Endothelial cell of umbilical vein (primary cell): ENCODE measurements at regions of chr4 and their contacts with region 1.

Region 1: GRCh38 chr4:151117371-151117962 is 18.0 kb downstream of the RPS3A start:
- DNase-seq: peak; percentile 86
- H3K4me3 ChIP-seq: no peak overlapping the region
- H3K27ac ChIP-seq: no peak overlapping the region
- H3K4me1 ChIP-seq: no peaks in the 10 kb centered on the region
- H3K27me3 ChIP-seq: no peaks in the 10 kb centered on the region
- CTCF ChIP-seq: peak; percentile 53 to 61
- POLR2A ChIP-seq: no peak

Region 2: DNA sequence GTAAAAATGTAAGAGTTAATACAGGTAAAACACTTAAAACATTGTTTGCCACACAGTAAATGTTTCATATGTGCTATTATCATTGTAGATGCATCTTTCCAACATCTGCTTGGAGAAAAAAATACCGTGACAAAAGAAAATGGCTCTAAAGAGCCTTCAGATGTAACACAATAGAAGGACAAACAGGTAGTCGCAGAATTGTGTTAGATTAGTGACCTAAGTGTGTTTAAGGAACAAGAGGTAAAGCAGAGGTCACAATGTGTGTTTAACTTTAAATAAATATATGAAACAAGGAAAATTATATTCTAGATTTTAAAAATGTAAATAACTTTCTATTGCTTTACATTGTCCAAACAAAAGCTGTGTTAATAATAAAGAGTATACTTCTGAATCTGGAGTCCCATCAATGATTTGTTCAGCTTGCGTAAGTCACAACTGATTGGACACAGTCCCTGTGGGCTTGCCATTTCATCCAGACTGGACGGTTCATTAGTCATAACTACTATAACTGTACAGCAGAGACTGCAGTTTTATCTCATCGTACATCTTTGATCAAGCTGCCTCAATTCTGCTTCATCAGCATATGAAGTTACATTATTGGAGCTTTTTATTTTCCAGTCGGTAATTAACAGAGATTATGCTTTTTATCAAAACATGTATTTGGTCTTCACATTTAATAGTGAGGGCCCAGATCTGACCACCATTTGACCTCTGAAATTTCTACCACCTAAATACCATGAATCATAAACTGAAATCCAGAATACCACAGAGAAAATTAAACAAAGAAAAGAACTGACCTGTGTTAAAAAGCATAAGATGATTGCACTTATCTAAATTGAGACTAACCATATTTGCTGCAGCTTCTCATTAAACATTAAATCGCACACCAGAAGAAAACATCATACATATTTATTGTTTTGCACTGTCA is 548.1 kb before region 1 on chr4:
- CTCF ChIA-PET with region 1: no interaction called
- POLR2A ChIA-PET with region 1: no interaction called
- dilution Hi-C with region 1: no loop called
- intact Hi-C with region 1: no loop called
- DNase-seq: no peak
- H3K4me3 ChIP-seq: no peak overlapping the region
- H3K27ac ChIP-seq: no peak overlapping the region
- H3K4me1 ChIP-seq: no peaks in the 10 kb centered on the region
- H3K27me3 ChIP-seq: no peaks in the 10 kb centered on the region
- CTCF ChIP-seq: no peak
- POLR2A ChIP-seq: no peak

Region 3: DNA sequence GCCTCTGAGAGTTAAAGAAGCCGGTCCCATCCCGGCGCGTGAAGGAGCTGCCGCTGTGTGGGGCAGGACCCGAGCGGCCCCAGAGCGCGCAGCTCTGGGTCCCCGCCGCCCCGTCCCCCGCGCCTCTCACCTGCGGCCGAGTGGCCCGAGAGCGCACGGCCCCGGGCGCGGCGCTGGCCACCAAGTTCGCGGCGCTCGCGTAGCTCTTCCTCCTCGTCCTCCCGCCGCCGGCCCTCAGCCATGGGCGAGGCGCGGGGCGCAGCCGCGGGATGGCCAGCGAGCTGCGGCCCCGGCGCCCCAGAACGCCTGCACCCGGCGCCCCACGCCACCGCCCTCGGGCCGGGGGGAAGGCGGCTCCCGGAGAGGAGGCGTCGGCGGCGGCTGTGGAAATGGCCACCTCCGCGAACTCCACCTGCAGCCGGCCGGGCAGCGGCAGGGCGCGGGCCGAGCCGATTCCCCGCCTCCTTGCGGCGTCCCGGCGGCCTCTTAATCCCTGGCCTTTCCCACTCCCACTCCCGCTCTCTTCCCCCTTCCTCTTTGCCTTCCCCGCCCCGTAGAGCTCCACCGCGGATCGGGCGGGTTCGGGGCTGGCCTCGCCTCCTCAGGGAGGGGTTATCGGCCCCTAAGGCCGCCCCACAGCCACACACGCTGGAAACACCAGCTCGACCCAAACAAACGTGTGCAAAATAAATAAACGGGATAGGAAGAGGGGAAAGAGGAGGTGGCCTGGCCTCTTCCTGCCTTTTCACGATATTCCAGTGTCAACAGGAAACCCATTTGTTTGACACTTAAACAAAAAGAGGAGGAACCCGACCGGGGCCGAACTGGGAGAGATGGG is 207.9 kb after region 1 on chr4 and contains the start of gene SH3D19:
- CTCF ChIA-PET with region 1: interaction called, 10 read pairs
- POLR2A ChIA-PET with region 1: no interaction called
- dilution Hi-C with region 1: no loop called
- intact Hi-C with region 1: no loop called
- DNase-seq: peak; percentile 91
- H3K4me3 ChIP-seq: peak within 1 kb of the TSS; percentile 55 to 86 (median 74)
- H3K27ac ChIP-seq: peak within 1 kb of the TSS; percentile 69
- H3K4me1 ChIP-seq: peaks cover 24% of the 10 kb centered on the region
- H3K27me3 ChIP-seq: no peaks in the 10 kb centered on the region
- CTCF ChIP-seq: no peak
- POLR2A ChIP-seq: peak; percentile 30
- total RNA-seq, gene SH3D19: 86.3 and 92.8 TPM in 2 replicates

Region 4: GRCh38 chr4:151418385-151418784 is 300.9 kb after region 1 on chr4:
- CTCF ChIA-PET with region 1: interaction called, 10 read pairs
- POLR2A ChIA-PET with region 1: no interaction called
- dilution Hi-C with region 1: no loop called
- intact Hi-C with region 1: loop called (anchors 1 kb)
- DNase-seq: peak; percentile 91
- H3K4me3 ChIP-seq: no peak overlapping the region
- H3K27ac ChIP-seq: peak overlapping the region; percentile 89
- H3K4me1 ChIP-seq: peaks cover 43% of the 10 kb centered on the region
- H3K27me3 ChIP-seq: no peaks in the 10 kb centered on the region
- CTCF ChIP-seq: no peak
- POLR2A ChIP-seq: peak; percentile 35

Region 5: DNA sequence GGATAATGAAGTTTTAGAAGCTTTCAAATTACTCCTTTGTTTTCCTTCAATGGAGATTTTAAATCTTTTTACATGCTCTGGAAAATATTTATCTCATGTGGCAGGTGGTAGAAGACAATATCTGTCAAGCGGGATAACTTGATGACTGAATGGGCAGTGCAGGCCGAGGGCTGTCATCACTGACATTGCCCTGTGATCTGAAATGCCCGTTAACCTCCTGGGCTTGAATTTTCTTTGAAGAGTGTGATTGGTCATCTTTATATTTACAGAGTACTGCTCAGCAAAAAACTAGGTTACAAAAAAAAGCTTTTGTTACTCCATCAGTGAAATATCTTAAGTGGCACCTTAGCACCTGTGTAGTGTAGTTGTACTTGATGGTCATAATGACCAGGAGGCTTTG is 495.8 kb after region 1 on chr4:
- CTCF ChIA-PET with region 1: interaction called, 9 read pairs
- POLR2A ChIA-PET with region 1: no interaction called
- dilution Hi-C with region 1: no loop called
- intact Hi-C with region 1: loop called (anchors 1 kb)
- DNase-seq: no peak
- H3K4me3 ChIP-seq: no peak overlapping the region
- H3K27ac ChIP-seq: no peak overlapping the region
- H3K4me1 ChIP-seq: no peaks in the 10 kb centered on the region
- H3K27me3 ChIP-seq: peaks cover 0 to under 1% of the 10 kb centered on the region in 2 experiments
- CTCF ChIP-seq: no peak
- POLR2A ChIP-seq: no peak